Ascending aorta (tissue), 2 donors: ENCODE measurements at regions of chr2 and their contacts with region 1.

Region 1: DNA sequence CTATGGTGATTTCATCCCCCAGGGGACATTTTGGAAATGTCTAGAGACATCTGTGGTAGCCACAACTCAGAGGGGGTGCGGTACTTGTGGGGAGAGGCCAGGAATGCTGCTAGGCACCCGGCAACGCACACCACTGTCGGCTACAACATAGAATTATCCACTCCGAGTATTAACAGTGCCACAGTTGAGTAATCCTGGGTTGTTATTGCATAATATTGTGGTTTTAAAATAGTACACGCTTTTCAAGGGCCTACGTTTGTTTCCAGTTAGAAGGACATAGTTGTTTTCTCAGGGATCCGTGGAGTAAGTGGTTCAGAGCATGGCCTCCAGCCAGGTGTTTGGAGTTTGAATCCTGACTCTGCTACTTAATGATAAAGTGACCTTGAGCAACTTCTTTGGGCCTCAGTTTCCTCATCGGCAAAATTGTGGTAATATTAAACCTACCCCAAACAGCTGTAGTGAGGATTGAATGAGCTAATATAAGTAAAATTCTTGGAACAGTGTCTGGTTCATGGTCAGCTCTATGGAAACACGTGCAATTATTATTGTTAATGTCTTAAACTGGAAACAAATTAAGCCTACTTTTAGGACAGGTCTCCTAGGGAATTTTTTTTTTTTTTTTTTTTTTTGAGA is 24.5 kb downstream of the CYP27A1 start:
- DNase-seq: peak; percentile 75 to 95
- H3K4me3 ChIP-seq: peak overlapping the region; percentile 22 to 31
- H3K27ac ChIP-seq: peak overlapping the region; percentile 68 to 88
- H3K4me1 ChIP-seq: peaks cover 4 to 23% of the 10 kb centered on the region in 2 donors
- H3K27me3 ChIP-seq: no peaks in the 10 kb centered on the region
- CTCF ChIP-seq: no peak

Region 2: DNA sequence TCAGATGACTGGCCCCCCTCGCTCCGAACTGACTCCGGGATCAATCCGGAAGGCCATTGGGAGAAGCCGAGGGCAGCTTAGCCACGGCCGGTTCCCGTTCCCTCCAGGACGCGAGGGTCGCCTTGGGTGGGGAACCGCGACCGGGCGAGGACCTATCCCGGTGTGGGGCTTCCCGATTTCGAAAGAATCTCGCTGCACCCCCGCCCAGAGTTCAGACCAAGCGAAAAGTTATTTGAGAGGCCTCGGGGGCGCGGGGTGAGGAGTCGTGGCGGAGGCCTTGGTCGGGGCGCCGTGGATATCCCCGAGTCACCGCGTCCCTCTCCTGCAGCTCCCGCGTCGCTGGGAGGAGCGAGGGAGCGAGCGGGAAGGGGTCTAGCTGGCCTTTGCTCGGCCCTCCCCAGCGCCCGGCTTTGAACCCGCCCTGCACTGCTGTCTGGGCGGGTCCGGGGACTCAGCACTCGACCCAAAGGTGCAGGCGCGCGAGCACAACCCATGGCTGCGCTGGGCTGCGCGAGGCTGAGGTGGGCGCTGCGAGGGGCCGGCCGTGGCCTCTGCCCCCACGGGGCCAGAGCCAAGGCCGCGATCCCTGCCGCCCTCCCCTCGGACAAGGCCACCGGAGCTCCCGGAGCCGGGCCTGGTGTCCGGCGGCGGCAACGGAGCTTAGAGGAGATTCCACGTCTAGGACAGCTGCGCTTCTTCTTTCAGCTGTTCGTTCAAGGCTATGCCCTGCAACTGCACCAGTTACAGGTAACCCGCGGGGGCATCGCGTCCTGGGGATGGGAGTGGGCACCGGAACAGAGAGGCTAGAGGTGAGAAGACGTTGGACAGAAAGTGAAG is 24.6 kb before region 1 on chr2 and contains the start of gene CYP27A1:
- intact Hi-C with region 1: loop called (anchors 1 kb)
- DNase-seq: peak in 1 of 2 donors; percentile 73
- H3K4me3 ChIP-seq: peak within 1 kb of the TSS; percentile 79 to 91
- H3K27ac ChIP-seq: peak within 1 kb of the TSS; percentile 88
- H3K4me1 ChIP-seq: peaks cover 0 to 5% of the 10 kb centered on the region in 2 donors
- H3K27me3 ChIP-seq: no peaks in the 10 kb centered on the region
- CTCF ChIP-seq: no peak
- total RNA-seq, gene CYP27A1: 53.1 TPM

Region 3: GRCh38 chr2:218820746-218821369 is 14.4 kb after region 1 on chr2:
- intact Hi-C with region 1: no loop called
- DNase-seq: no peak
- H3K4me3 ChIP-seq: no peak overlapping the region
- H3K27ac ChIP-seq: no peak overlapping the region
- H3K4me1 ChIP-seq: no peaks in the 10 kb centered on the region
- H3K27me3 ChIP-seq: no peaks in the 10 kb centered on the region
- CTCF ChIP-seq: no peak